ENCODE measurements at regions of chr2 and their contacts with region 1.

Region 1: GRCh38 chr2:46887028-46887885 is 28.3 kb downstream of the MCFD2 start:
- DNase-seq: no peak
- H3K4me3 ChIP-seq: no peak overlapping the region
- H3K27ac ChIP-seq: peak overlapping the region in 1 of 2 experiments; percentile 85; a peak in 2 of 4 replicates
- H3K4me1 ChIP-seq: peaks cover 0 to 35% of the 10 kb centered on the region in 2 experiments; a peak in 2 of 4 replicates
- H3K27me3 ChIP-seq: no peaks in the 10 kb centered on the region
- CTCF ChIP-seq: no peak
- EP300 ChIP-seq: no peak; a peak in 1 of 4 replicates
- RAD21 ChIP-seq: no peak

Region 2: DNA sequence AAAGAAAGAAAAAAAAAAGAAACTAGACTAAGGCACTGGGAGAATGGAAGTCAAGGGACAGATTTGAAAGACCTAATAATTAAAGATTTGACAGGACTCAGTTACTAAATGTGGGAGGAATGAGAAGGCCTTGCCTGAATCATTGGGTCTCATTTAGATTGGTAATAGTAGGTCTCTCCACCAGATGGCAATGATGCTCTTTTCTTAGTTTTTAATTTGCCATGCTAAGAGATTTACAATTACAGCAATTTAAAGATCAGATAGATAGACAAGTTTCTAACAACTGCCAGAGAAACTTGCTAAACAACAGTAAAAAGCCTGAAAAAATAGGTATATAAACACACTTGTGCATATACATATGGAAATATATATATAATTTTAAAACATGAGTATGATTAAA is 254.9 kb before region 1 on chr2:
- CTCF ChIA-PET with region 1: interaction called, 28 read pairs
- POLR2A ChIA-PET with region 1: no interaction called
- DNase-seq: peak; percentile 56
- H3K4me3 ChIP-seq: no peak overlapping the region
- H3K27ac ChIP-seq: peak overlapping the region in 1 of 2 experiments; percentile 17; a peak in 1 of 4 replicates
- H3K4me1 ChIP-seq: no peaks in the 10 kb centered on the region
- H3K27me3 ChIP-seq: no peaks in the 10 kb centered on the region
- CTCF ChIP-seq: peak; percentile 87
- EP300 ChIP-seq: no peak
- RAD21 ChIP-seq: peak; percentile 92

Region 3: DNA sequence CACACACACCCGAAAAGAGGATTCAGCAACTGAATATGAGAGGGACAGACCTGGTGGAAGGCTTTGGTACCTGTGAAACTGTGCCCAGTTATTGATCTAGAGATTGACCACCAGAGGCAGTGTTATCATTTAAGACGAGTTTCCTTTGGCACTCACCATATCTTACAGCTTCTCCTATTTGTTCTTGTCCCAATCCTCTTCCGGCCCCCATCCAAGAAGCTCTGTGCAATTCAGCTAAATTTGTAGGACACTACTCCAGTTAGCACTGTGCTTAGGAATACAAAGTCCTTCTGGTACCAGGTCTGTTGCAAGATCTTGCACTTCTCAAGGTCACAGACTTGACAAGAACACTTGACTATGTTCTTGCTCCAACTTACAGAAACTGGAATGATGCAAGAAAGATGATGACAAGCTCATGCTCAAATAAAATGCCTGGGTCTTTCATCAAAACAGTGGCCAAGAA is 230.2 kb before region 1 on chr2:
- CTCF ChIA-PET with region 1: interaction called, 99 read pairs
- POLR2A ChIA-PET with region 1: no interaction called
- DNase-seq: peak; percentile 52
- H3K4me3 ChIP-seq: no peak overlapping the region
- H3K27ac ChIP-seq: no peak overlapping the region
- H3K4me1 ChIP-seq: peaks cover 7 to 18% of the 10 kb centered on the region in 2 experiments; a peak in 2 of 4 replicates
- H3K27me3 ChIP-seq: no peaks in the 10 kb centered on the region
- CTCF ChIP-seq: peak; percentile 67
- EP300 ChIP-seq: no peak
- RAD21 ChIP-seq: peak; percentile 68

Region 4: GRCh38 chr2:46899053-46899452 is 11.8 kb after region 1 on chr2:
- CTCF ChIA-PET with region 1: interaction called, 11 read pairs
- POLR2A ChIA-PET with region 1: no interaction called
- DNase-seq: no peak
- H3K4me3 ChIP-seq: no peak overlapping the region
- H3K27ac ChIP-seq: no peak overlapping the region
- H3K4me1 ChIP-seq: peaks cover 0 to 7% of the 10 kb centered on the region in 2 experiments; a peak in 2 of 4 replicates
- H3K27me3 ChIP-seq: no peaks in the 10 kb centered on the region
- CTCF ChIP-seq: no peak
- EP300 ChIP-seq: no peak
- RAD21 ChIP-seq: no peak

Region 5: DNA sequence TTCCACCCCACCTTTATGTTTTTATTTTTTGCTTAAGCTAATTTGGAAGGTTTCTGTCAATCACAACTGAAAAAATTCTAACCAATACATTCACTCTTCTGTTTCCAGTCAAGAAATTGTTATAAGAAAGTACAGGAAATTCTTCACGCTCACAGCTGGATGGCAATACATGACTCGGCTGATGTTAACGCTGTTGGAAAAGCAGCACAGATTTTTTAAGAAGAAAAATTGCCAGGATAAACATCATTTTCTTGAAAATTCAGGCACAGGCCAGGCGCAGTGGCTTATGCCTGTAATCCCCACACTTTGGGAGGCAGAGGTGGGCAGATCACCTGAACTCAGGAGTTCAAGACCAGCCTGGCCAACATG is 221.7 kb after region 1 on chr2:
- CTCF ChIA-PET with region 1: no interaction called
- POLR2A ChIA-PET with region 1: no interaction called
- DNase-seq: no peak
- H3K4me3 ChIP-seq: no peak overlapping the region
- H3K27ac ChIP-seq: no peak overlapping the region
- H3K4me1 ChIP-seq: no peaks in the 10 kb centered on the region
- H3K27me3 ChIP-seq: no peaks in the 10 kb centered on the region
- CTCF ChIP-seq: no peak
- EP300 ChIP-seq: no peak
- RAD21 ChIP-seq: no peak

Region 6: DNA sequence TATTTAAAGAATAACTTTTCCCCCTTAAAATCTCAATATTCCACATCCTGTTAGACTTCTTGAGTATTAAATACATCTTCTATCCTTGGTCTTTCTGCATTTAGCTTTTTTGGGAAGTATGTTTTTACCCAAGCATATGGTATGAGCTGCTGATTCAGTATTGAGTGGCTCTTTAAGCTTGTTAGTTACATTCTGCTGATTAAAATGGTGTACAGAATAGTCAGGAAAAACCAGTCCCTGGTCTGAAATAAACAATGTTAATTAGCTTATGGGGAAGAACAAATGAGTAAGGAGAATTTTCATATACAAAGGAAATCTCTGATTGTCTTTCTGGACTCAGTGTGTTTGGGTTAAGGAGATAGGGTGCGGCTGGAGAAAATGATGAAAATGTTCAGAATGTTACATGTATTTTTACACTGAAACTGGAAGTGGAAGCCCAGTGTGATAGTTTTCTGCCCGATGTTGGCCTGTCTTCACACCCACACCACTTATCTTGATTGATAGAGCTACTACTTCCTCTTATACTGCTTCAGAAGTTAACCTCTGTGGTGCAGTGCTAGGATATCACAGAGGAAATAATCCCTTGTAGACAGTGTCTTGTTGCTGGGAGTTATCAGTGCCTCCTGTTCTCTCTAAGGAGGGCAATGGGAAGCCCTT is 599.7 kb after region 1 on chr2:
- CTCF ChIA-PET with region 1: no interaction called
- POLR2A ChIA-PET with region 1: no interaction called
- DNase-seq: no peak
- H3K4me3 ChIP-seq: no peak overlapping the region
- H3K27ac ChIP-seq: no peak overlapping the region
- H3K4me1 ChIP-seq: no peaks in the 10 kb centered on the region
- H3K27me3 ChIP-seq: no peaks in the 10 kb centered on the region
- CTCF ChIP-seq: no peak
- EP300 ChIP-seq: no peak
- RAD21 ChIP-seq: no peak

Measured in SK-N-SH (cell line).